ENCODE measurements at regions of chr3 and their contacts with region 1.

Region 1: DNA sequence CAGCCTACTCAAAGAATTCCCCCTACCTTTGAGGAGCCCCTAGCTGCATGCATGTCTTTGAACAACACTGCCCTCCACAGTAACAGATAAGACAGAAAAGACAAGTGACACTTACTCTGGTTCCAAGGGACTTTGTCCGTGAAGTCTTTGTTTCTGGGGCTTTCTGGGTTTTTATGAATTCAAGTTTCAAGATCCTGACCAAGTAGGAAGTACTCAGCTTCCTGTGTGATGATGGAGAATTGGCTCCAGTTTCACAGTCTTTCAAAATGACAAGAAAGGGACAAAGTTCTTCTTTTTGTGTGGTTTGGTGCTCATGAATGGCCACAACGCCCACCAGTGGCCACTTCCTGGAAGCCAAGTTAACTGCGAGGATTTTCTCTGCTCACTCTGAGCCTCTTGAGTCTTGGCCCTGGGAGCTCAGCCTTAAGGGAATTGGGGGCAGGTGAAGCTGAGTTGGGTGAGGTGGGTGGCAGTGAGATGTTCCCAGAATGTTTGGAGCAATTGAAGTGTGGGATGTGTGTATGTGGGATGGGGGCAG is at the start of gene CCR1:
- DNase-seq: peak; percentile 50
- ATAC-seq: peak; percentile 81
- H3K4me3 Mint-ChIP-seq: no peak within 1 kb of the TSS
- H3K27ac Mint-ChIP-seq: no peak within 1 kb of the TSS
- H3K4me1 Mint-ChIP-seq: peaks cover 15% of the 10 kb centered on the region
- H3K27me3 Mint-ChIP-seq: no peaks in the 10 kb centered on the region
- CTCF ChIP-seq: 0 out of 2 replicates have a peak, but pooled peaks have one; percentile 11
- total RNA-seq, gene CCR1: not detected in 3 replicates

Region 2: GRCh38 chr3:46163318-46164041 is 44.8 kb before region 1 on chr3:
- CTCF ChIA-PET with region 1: interaction called, 13 read pairs
- POLR2A ChIA-PET with region 1: no interaction called
- DNase-seq: no peak
- ATAC-seq: peak; percentile 46
- H3K4me3 Mint-ChIP-seq: no peak overlapping the region
- H3K27ac Mint-ChIP-seq: no peak overlapping the region
- H3K4me1 Mint-ChIP-seq: peaks cover 3% of the 10 kb centered on the region
- H3K27me3 Mint-ChIP-seq: peaks cover 9% of the 10 kb centered on the region
- CTCF ChIP-seq: no peak

Region 3: DNA sequence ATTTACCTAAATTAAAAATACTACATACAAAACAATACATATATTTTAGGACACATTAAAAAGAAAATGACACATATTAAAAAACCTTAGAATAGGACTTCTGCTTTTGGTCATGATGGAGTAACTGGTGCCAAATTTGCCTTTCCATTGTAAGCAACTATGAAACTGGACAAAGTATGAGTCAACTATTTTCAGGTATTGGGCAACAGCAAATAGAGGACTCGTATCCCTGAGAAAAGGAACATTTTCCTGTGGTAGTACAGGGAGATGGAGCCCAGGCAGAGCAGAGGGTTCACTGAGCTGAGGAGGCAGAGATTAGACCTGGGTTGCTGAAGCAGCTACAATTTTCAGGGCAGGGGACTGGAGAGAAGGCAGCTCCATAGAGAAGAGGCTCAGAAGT is 14.8 kb before region 1 on chr3:
- CTCF ChIA-PET with region 1: interaction called, 14 read pairs
- POLR2A ChIA-PET with region 1: no interaction called
- DNase-seq: no peak
- ATAC-seq: no peak
- H3K4me3 Mint-ChIP-seq: no peak overlapping the region
- H3K27ac Mint-ChIP-seq: no peak overlapping the region
- H3K4me1 Mint-ChIP-seq: no peaks in the 10 kb centered on the region
- H3K27me3 Mint-ChIP-seq: no peaks in the 10 kb centered on the region; the same call in 1 of the 2 replicates
- CTCF ChIP-seq: no peak

Region 4: DNA sequence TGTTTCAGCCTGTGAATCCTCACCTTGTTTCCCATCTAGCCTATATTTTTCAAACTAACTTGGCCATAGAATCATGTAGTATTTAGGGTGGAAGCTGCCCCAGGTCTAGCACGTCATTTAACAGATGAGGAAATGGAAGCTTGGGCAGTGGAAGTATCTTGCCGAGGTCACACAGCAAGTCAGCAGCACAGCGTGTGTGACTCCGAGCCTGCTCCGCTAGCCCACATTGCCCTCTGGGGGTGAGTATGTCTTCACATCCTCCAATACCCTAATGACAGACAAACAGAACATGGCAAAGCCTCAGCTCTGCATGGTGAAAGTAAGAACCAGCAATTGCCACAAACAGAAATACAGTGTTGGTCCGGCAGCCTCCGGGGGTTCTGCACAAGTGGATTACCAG is 160.3 kb after region 1 on chr3:
- CTCF ChIA-PET with region 1: interaction called, 36 read pairs
- POLR2A ChIA-PET with region 1: no interaction called
- DNase-seq: peak; percentile 59
- ATAC-seq: peak; percentile 98
- H3K4me3 Mint-ChIP-seq: no peak overlapping the region
- H3K27ac Mint-ChIP-seq: no peak overlapping the region
- H3K4me1 Mint-ChIP-seq: no peaks in the 10 kb centered on the region
- H3K27me3 Mint-ChIP-seq: peaks cover 2% of the 10 kb centered on the region; the same call in 1 of the 2 replicates
- CTCF ChIP-seq: no peak

Region 5: DNA sequence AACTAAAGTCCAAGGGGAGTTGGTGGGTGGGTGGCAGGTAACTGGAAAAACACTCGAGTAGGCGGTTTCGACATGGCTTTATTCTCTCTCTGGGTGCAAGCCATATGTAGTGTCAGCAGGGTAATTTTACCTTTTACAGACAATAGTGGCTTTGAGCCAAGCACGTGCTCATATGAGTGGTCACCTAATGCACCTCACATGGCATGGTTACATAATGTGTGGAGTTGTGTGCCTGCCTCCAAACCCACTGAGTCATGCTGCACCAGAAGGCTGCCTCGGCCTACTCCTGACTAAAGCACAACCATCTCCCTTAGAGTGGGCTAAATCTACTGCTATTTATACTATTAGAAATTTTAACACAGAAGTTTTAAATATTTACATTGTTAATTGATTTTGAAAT is 215.4 kb after region 1 on chr3:
- CTCF ChIA-PET with region 1: interaction called, 10 read pairs
- POLR2A ChIA-PET with region 1: no interaction called
- DNase-seq: no peak
- ATAC-seq: no peak
- H3K4me3 Mint-ChIP-seq: no peak overlapping the region
- H3K27ac Mint-ChIP-seq: no peak overlapping the region
- H3K4me1 Mint-ChIP-seq: peaks cover 4% of the 10 kb centered on the region
- H3K27me3 Mint-ChIP-seq: no peaks in the 10 kb centered on the region
- CTCF ChIP-seq: no peak

Measured in WTC11 (cell line).